ENCODE measurements at regions of chr2 and their contacts with region 1.

Region 1: DNA sequence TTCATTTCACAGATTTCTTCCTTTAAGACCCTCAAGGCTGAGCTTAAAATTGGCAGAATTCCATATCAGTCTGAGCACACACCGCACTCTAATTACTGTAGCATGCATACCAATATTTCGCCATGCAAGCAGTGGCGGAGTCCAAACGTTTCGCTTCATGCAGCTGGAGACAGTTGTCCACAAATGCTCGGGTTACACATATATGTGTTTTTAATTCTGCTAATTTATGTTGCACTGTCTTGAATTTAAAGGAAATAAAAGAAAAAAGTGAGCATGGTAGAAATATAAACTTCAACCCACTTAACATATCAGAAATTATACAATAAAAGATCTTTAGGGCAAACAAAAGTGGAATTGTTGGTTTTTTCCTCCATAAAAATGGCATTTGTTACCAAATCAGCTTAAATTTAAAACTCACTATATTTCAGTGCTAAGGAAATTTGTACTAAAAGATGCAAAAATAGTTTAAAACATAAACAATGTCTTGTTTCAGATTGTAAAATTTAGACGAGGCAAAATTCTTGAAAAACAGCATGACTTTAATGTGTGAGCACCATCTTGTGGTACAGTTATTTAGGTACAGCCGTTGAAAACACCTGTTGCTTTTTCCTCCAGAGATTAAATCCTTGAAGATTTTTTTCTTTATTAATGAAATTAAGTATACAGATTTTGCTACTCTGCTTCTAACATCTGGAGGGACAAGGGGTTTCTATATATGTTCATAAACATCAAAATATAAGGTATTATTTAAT is 24.1 kb upstream of the KANSL1L start:
- DNase-seq: peak; percentile 38
- ATAC-seq: peak; percentile 77
- H3K4me3 ChIP-seq: peak overlapping the region; percentile 37 to 50
- H3K27ac ChIP-seq: no peak overlapping the region
- H3K4me1 ChIP-seq: peaks cover 0 to 5% of the 10 kb centered on the region in 2 experiments; a peak in 1 of 4 replicates
- H3K27me3 ChIP-seq: no peaks in the 10 kb centered on the region
- CTCF ChIP-seq: peak; percentile 48 to 85 (median 75); a peak in 5 of 6 replicates
- POLR2A ChIP-seq: no peak
- RAD21 ChIP-seq: peak; percentile 86

Region 2: GRCh38 chr2:209423562-209424198 is 771.6 kb before region 1 on chr2 and contains the start of gene MAP2:
- CTCF ChIA-PET with region 1: interaction called, 8 read pairs
- POLR2A ChIA-PET with region 1: no interaction called
- RAD21 ChIA-PET with region 1: no interaction called
- intact Hi-C with region 1: loop called (anchors 5 kb)
- DNase-seq: peak; percentile 66
- ATAC-seq: peak; percentile 95
- H3K4me3 ChIP-seq: peak within 1 kb of the TSS; percentile 71 to 81
- H3K27ac ChIP-seq: peak within 1 kb of the TSS; percentile 2; the same call in 1 of the 2 replicates
- H3K4me1 ChIP-seq: peaks cover 10 to 26% of the 10 kb centered on the region in 2 experiments; a peak in 3 of 4 replicates
- H3K27me3 ChIP-seq: no peaks in the 10 kb centered on the region
- CTCF ChIP-seq: peak; percentile 66 to 98 (median 77)
- POLR2A ChIP-seq: peak; percentile 32
- RAD21 ChIP-seq: peak; percentile 62
- total RNA-seq, gene MAP2: 7.4 TPM

Region 3: GRCh38 chr2:209790066-209790728 is 405.1 kb before region 1 on chr2:
- CTCF ChIA-PET with region 1: interaction called, 8 read pairs
- POLR2A ChIA-PET with region 1: no interaction called
- RAD21 ChIA-PET with region 1: no interaction called
- intact Hi-C with region 1: loop called (anchors 5 kb)
- DNase-seq: no peak
- ATAC-seq: no peak
- H3K4me3 ChIP-seq: no peak overlapping the region
- H3K27ac ChIP-seq: no peak overlapping the region
- H3K4me1 ChIP-seq: no peaks in the 10 kb centered on the region
- H3K27me3 ChIP-seq: no peaks in the 10 kb centered on the region
- CTCF ChIP-seq: no peak
- POLR2A ChIP-seq: no peak
- RAD21 ChIP-seq: no peak

Region 4: GRCh38 chr2:210072922-210073509 is 122.3 kb before region 1 on chr2:
- CTCF ChIA-PET with region 1: interaction called, 6 read pairs
- POLR2A ChIA-PET with region 1: no interaction called
- RAD21 ChIA-PET with region 1: no interaction called
- intact Hi-C with region 1: loop called (anchors 1 kb)
- DNase-seq: peak; percentile 35
- ATAC-seq: peak; percentile 84
- H3K4me3 ChIP-seq: no peak overlapping the region
- H3K27ac ChIP-seq: no peak overlapping the region
- H3K4me1 ChIP-seq: no peaks in the 10 kb centered on the region
- H3K27me3 ChIP-seq: no peaks in the 10 kb centered on the region
- CTCF ChIP-seq: peak; percentile 54 to 75 (median 65); a peak in 5 of 6 replicates
- POLR2A ChIP-seq: no peak
- RAD21 ChIP-seq: peak; percentile 74